ENCODE measurements at regions of chr11 and their contacts with region 1.

Region 1: GRCh38 chr11:125111343-125112207 is at the start of gene TMEM218:
- DNase-seq: peak; percentile 89 to 99 (median 93)
- ATAC-seq: peak; percentile 88
- H3K4me3 ChIP-seq: peak within 1 kb of the TSS; percentile 89 to 92
- H3K4me3 Mint-ChIP-seq: peak within 1 kb of the TSS; percentile 99
- H3K27ac ChIP-seq: peak within 1 kb of the TSS; percentile 75 to 86
- H3K27ac Mint-ChIP-seq: peak within 1 kb of the TSS; percentile 96
- H3K4me1 ChIP-seq: peaks cover 15% of the 10 kb centered on the region
- H3K4me1 Mint-ChIP-seq: peaks cover 20% of the 10 kb centered on the region
- H3K27me3 ChIP-seq: no peaks in the 10 kb centered on the region
- H3K27me3 Mint-ChIP-seq: no peaks in the 10 kb centered on the region
- CTCF ChIP-seq: no peak
- total RNA-seq, gene TMEM218: 2.5 to 3.4 TPM

Region 2: DNA sequence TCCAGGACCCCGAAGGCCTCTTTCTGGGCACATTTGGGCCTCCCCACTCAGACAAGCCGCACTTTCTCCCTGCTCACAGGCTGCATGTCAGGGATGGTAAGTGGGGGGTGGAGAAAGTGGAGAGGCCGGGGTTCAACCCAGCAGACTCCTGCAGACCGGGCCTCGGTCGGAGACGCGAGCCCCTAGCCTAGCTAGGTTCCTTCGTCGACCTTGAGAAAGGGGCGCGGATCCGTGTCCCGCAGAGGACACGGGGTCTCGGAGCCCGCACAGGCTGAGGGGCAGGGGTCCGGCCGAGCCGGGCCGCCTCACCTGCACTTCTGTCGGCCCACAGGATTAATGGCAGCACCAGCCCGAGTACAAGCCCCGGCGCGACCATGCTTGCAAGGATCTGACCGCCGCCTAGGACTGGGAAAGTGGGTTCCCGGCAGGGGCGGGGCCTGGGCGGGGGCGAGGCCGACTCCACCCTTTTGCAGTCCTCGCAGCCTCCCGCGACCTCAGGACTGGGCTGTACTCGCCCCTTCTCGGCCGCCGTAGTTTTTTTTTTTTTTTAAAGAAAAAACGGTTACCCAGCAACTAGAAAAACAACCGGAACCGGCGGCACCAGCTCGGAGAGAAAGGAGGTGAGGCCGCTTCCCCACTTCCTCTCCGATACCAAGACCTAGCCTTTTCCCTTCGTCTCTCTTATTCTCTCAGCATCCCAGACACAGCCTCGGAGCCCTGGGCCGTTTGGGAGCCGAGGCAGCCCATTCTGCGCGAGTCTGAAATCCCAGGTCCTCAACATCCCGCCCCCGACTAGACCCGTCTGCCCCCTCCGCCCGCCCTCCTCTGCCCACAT is 438.0 kb before region 1 on chr11 and contains the starts of genes SIAE and SPA17:
- CTCF ChIA-PET with region 1: no interaction called
- POLR2A ChIA-PET with region 1: no interaction called
- intact Hi-C with region 1: loop called in 1 of 2 experiments (anchors 5 kb)
- DNase-seq: peak; percentile 65 to 94 (median 84)
- ATAC-seq: peak; percentile 77
- H3K4me3 ChIP-seq: peak within 1 kb of the TSS; percentile 69 to 82
- H3K4me3 Mint-ChIP-seq: peak within 1 kb of the TSS; percentile 89
- H3K27ac ChIP-seq: peak within 1 kb of the TSS; percentile 77 to 80
- H3K27ac Mint-ChIP-seq: peak within 1 kb of the TSS; percentile 96
- H3K4me1 ChIP-seq: peaks cover 43% of the 10 kb centered on the region
- H3K4me1 Mint-ChIP-seq: peaks cover 31% of the 10 kb centered on the region
- H3K27me3 ChIP-seq: no peaks in the 10 kb centered on the region
- H3K27me3 Mint-ChIP-seq: no peaks in the 10 kb centered on the region
- CTCF ChIP-seq: no peak
- total RNA-seq, gene SIAE: 2.4 to 3.2 TPM
- total RNA-seq, gene SPA17: 0.22 to 0.68 TPM

Region 3: DNA sequence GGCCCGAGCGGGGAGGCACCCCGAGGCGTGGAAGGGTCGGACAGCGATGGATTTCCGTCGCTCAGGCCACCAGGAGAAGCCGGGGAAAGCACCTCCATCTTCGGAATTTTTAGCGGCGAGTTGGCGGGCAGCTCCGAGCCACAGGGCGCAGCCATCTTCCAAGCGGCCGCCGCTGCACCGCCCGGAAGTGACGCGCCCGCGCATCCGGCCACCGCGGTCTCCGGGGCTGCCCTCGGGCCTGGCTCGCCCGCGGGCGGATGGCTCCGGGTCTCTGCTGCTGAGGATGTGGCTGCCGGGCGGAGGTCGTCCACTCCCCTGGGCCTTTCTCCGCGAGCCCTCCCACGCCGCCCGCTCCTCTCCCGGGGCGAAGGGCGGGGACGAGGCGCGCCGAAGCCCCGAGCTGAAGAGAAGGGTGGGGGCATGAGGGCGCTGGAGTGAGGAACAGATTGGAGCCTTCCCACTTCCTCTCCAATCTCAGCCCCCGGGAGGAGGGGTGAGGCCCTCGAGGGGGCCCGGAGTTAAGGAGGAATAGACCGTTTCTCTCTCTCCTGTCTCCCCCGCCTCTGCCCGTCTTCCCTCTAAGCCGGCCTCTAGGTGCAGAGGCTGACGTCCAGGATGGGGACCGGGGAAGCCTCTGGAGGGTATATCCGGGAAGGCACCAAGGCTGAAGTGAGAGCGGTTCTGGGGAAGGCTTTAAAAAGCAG is 311.2 kb before region 1 on chr11 and contains the start of gene MSANTD2:
- CTCF ChIA-PET with region 1: no interaction called
- POLR2A ChIA-PET with region 1: no interaction called
- intact Hi-C with region 1: loop called in 1 of 2 experiments (anchors 1 kb)
- DNase-seq: peak; percentile 57 to 88 (median 80)
- ATAC-seq: peak; percentile 76
- H3K4me3 ChIP-seq: peak within 1 kb of the TSS; percentile 72 to 84
- H3K4me3 Mint-ChIP-seq: peak within 1 kb of the TSS; percentile 96
- H3K27ac ChIP-seq: peak within 1 kb of the TSS; percentile 91 to 98
- H3K27ac Mint-ChIP-seq: peak within 1 kb of the TSS; percentile 96
- H3K4me1 ChIP-seq: peaks cover 17% of the 10 kb centered on the region
- H3K4me1 Mint-ChIP-seq: peaks cover 32% of the 10 kb centered on the region
- H3K27me3 ChIP-seq: no peaks in the 10 kb centered on the region
- H3K27me3 Mint-ChIP-seq: no peaks in the 10 kb centered on the region
- CTCF ChIP-seq: no peak
- total RNA-seq, gene MSANTD2: 4.3 to 4.5 TPM

Region 4: GRCh38 chr11:124953753-124954589 is 157.6 kb before region 1 on chr11 and contains the start of gene CCDC15:
- CTCF ChIA-PET with region 1: interaction called, 4 read pairs
- POLR2A ChIA-PET with region 1: interaction called, 15 read pairs
- intact Hi-C with region 1: loop called (anchors 1 kb)
- DNase-seq: peak; percentile 84 to 98 (median 95)
- ATAC-seq: peak; percentile 97
- H3K4me3 ChIP-seq: peak within 1 kb of the TSS; percentile 58 to 86
- H3K4me3 Mint-ChIP-seq: no peak within 1 kb of the TSS
- H3K27ac ChIP-seq: peak within 1 kb of the TSS; percentile 76 to 93
- H3K27ac Mint-ChIP-seq: no peak within 1 kb of the TSS
- H3K4me1 ChIP-seq: peaks cover 50% of the 10 kb centered on the region
- H3K4me1 Mint-ChIP-seq: peaks cover 2% of the 10 kb centered on the region
- H3K27me3 ChIP-seq: no peaks in the 10 kb centered on the region
- H3K27me3 Mint-ChIP-seq: no peaks in the 10 kb centered on the region
- CTCF ChIP-seq: no peak
- total RNA-seq, gene CCDC15: 0.56 to 0.57 TPM

Region 5: DNA sequence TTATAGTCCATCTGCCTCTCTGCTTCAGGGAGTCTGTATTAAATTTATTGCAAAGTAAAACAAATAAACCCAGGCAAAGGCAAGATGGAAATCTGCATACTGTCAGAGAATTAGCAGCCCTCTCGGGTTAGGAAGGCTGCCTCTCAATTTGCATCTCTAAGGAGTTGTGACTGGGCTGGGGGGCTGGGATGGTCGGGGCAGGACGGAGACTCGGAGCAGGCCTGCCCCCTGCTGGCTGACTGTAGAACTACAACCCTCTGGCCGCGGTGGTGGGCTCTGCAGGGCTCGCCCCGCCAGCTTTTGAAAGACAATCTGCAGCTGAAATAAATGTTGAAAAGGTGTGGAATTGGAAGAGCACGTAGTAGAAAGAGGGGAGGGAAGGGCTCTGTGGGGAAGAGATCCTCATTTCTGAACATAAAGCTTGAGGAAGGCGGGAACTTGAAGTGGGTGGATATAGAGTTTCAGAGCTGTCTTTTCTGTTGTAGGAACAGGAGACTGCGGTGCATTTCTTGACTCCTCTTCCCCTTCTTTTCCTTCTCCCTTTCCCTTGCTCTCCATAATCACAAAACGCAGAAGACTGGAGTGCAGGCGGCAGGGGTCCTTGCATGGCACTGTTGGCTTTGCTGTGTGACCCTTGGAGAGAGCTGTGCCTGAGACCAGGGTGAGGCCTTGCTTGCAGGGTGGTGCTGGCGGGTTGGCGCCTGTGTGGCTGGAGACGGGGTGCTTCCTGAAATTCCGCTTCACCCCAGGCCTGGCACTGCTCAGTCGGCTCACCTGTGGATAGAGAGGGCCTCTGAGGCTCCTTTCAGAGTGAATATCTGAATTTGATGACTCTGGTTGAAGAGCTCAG is 30.3 kb after region 1 on chr11:
- CTCF ChIA-PET with region 1: interaction called, 13 read pairs
- POLR2A ChIA-PET with region 1: no interaction called
- intact Hi-C with region 1: no loop called
- DNase-seq: peak; percentile 15 to 79 (median 62)
- ATAC-seq: peak; percentile 99
- H3K4me3 ChIP-seq: no peak overlapping the region
- H3K4me3 Mint-ChIP-seq: no peak overlapping the region
- H3K27ac ChIP-seq: no peak overlapping the region
- H3K27ac Mint-ChIP-seq: no peak overlapping the region
- H3K4me1 ChIP-seq: peaks cover 5% of the 10 kb centered on the region
- H3K4me1 Mint-ChIP-seq: peaks cover 5% of the 10 kb centered on the region
- H3K27me3 ChIP-seq: peaks cover 2 to 3% of the 10 kb centered on the region in 2 experiments
- H3K27me3 Mint-ChIP-seq: peaks cover 44% of the 10 kb centered on the region
- CTCF ChIP-seq: peak; percentile 99

Region 6: GRCh38 chr11:125887373-125888324 is 776.1 kb after region 1 on chr11 and contains the start of gene HYLS1:
- CTCF ChIA-PET with region 1: no interaction called
- POLR2A ChIA-PET with region 1: no interaction called
- intact Hi-C with region 1: loop called in 1 of 2 experiments (anchors 5 kb)
- DNase-seq: peak; percentile 87 to 97 (median 94)
- ATAC-seq: peak; percentile 88
- H3K4me3 ChIP-seq: peak within 1 kb of the TSS; percentile 81 to 84
- H3K4me3 Mint-ChIP-seq: peak within 1 kb of the TSS; percentile 88
- H3K27ac ChIP-seq: peak within 1 kb of the TSS; percentile 61 to 87
- H3K27ac Mint-ChIP-seq: peak within 1 kb of the TSS; percentile 87
- H3K4me1 ChIP-seq: peaks cover 10% of the 10 kb centered on the region
- H3K4me1 Mint-ChIP-seq: peaks cover 31% of the 10 kb centered on the region
- H3K27me3 ChIP-seq: no peaks in the 10 kb centered on the region
- H3K27me3 Mint-ChIP-seq: no peaks in the 10 kb centered on the region
- CTCF ChIP-seq: no peak
- total RNA-seq, gene HYLS1: 1.1 to 1.2 TPM

Measured in CD8-positive, alpha-beta T cell (primary cell).